ENCODE measurements at regions of chr11 and their contacts with region 1.

Region 1: GRCh38 chr11:45917623-45918330 is at the start of gene PEX16:
- DNase-seq: peak; percentile 93 to 97 (median 96)
- H3K4me3 ChIP-seq: peak within 1 kb of the TSS; percentile 55 to 100 (median 96)
- H3K27ac ChIP-seq: peak within 1 kb of the TSS; percentile 31 to 97 (median 92)
- H3K27me3 ChIP-seq: peaks cover 0 to 17% (median 10%) of the 10 kb centered on the region in 45 donors
- CTCF ChIP-seq: peak in 17 of 56 donors; percentile 6 to 58 (median 27)
- total RNA-seq, gene PEX16: 26.7 to 59.7 (median 43.8) TPM

Region 2: DNA sequence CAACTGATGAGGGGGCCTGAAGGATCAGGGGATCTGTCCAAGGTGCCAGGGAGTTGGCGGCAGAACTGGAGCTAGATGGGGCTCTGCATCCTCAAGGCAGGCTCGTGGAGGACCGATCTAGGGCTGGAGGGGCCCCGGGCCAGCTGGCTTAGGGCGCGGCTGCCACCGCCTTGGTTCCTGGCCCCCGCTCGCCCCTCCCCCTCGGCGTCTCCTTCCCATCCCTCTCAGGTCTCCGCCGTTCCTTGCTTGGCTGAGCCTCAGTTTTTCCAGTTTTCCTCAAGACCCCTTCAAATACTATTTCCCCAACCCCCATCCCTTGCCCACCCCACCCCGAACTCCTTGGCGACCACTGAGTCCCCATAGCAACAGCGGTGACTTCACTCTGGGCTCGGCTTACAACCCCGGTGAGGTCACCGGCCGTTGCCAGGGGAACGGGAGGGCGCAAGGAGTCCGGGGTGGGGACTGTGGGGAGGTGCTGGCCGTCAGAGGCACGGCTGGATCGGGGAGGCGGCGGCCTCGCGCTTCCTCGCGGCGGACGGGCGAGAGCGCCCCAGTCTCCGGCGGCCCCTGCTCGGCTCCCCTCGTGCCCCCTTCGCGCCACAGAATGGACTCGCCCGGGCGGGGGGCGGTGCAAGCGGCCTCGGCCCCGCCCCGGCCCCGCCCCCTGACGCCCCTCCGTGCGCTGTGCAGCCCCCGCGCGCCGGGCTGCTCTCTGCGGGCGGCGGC is 18.2 kb before region 1 on chr11:
- intact Hi-C with region 1: loop called in 1 of 2 experiments (anchors 1 kb)
- DNase-seq: peak; percentile 83 to 97 (median 94)
- H3K4me3 ChIP-seq: peak overlapping the region; percentile 34 to 93 (median 79)
- H3K27ac ChIP-seq: peak overlapping the region; percentile 41 to 100 (median 97)
- H3K27me3 ChIP-seq: no peaks in the 10 kb centered on the region
- CTCF ChIP-seq: peak in 15 of 56 donors; percentile 4 to 34 (median 13)